OCI-LY7 (cell line): ENCODE measurements at regions of chr13 and their contacts with region 1.

Region 1: GRCh38 chr13:30617315-30618185 is at the start of gene USPL1:
- DNase-seq: peak; percentile 99
- H3K4me3 ChIP-seq: peak within 1 kb of the TSS; percentile 73
- H3K27ac ChIP-seq: peak within 1 kb of the TSS; percentile 92
- H3K4me1 ChIP-seq: peaks cover 43% of the 10 kb centered on the region
- CTCF ChIP-seq: peak; percentile 29; the same call in 1 of the 2 replicates
- total RNA-seq, gene USPL1: 19.2 and 21.1 TPM in 2 replicates

Region 2: DNA sequence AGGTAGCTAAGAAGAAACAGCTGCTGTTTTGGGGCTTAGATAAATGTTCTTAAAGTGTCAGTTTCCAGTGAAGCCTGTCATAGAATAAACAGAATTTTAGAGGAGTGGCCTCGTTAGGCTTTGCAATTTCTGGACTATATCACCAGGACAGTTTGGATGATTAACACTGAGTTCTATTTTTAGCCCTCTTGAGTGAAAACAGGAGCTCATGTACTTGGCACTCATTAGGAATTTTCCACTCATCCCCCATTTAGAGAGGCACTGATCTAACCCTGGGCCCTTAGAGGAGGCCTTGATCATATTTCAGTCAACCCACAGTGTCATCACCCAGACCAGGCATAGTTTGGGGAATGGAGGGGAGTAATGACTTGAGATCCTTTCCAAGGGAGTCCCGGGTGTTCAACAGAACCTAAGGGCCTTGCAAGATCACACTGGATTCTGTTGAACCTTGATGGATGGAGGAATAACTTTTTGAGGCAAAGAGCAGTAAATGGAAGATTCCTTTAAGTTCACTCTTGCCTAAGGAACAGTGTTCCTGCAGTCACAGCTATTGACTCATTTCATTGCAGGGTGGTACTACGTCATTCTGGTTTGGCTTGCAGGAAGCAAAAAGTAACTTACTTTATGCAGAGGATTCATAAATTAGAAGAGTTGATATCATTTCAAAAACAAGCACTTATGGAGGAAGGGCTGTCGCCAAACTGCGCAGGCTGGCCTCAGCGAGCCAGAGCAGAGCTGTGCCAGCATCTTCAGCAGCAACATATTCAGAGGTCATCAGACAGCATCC is 1182.2 kb before region 1 on chr13:
- CTCF ChIA-PET with region 1: no interaction called
- POLR2A ChIA-PET with region 1: interaction called, 3 read pairs
- intact Hi-C with region 1: loop called (anchors 10 kb)
- DNase-seq: no peak
- H3K4me3 ChIP-seq: peak overlapping the region; percentile 25
- H3K27ac ChIP-seq: peak overlapping the region; percentile 95
- H3K4me1 ChIP-seq: peaks cover 55% of the 10 kb centered on the region
- CTCF ChIP-seq: no peak

Region 3: GRCh38 chr13:30132623-30133553 is 484.7 kb before region 1 on chr13:
- CTCF ChIA-PET with region 1: no interaction called
- POLR2A ChIA-PET with region 1: no interaction called
- intact Hi-C with region 1: loop called (anchors 1 kb)
- DNase-seq: peak; percentile 93
- H3K4me3 ChIP-seq: no peak overlapping the region
- H3K27ac ChIP-seq: no peak overlapping the region
- H3K4me1 ChIP-seq: peaks cover 10% of the 10 kb centered on the region
- CTCF ChIP-seq: peak; percentile 94

Region 4: DNA sequence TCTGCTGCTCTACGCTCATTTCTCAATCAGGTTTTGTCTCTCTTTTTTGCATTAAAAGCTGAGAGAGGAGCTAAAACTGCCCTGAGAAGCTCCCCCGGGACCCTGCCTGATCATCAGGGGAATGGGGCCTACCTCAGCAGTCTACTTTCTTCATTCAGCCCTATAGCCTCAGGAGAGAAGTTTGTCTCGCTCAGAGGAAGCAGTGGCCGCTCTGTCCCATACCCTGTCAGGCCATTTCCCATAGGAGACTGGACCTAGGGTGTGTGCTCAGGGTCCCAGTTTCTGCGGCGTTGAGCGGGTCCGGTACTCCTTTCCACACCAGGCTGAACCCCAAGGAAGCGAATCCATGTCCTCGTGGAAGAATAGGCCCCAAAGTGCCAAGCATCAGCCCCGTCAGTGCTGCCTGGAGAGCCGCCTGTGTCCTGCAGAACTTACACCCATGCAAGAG is 173.6 kb before region 1 on chr13:
- CTCF ChIA-PET with region 1: no interaction called
- POLR2A ChIA-PET with region 1: interaction called, 24 read pairs
- intact Hi-C with region 1: loop called (anchors 5 kb)
- DNase-seq: peak; percentile 97
- H3K4me3 ChIP-seq: peak overlapping the region; percentile 87
- H3K27ac ChIP-seq: peak overlapping the region; percentile 98
- H3K4me1 ChIP-seq: peaks cover 72% of the 10 kb centered on the region
- CTCF ChIP-seq: no peak; the same call in 1 of the 2 replicates

Region 5: GRCh38 chr13:30647420-30647819 is 29.9 kb after region 1 on chr13:
- CTCF ChIA-PET with region 1: no interaction called
- POLR2A ChIA-PET with region 1: interaction called, 10 read pairs
- intact Hi-C with region 1: no loop called
- DNase-seq: no peak
- H3K4me3 ChIP-seq: peak overlapping the region; percentile 43
- H3K27ac ChIP-seq: peak overlapping the region; percentile 81
- H3K4me1 ChIP-seq: peaks cover 50% of the 10 kb centered on the region
- CTCF ChIP-seq: no peak

Region 6: GRCh38 chr13:30739761-30740642 is 122.5 kb after region 1 on chr13:
- CTCF ChIA-PET with region 1: no interaction called
- POLR2A ChIA-PET with region 1: interaction called, 8 read pairs
- intact Hi-C with region 1: loop called (anchors 2 kb)
- DNase-seq: peak; percentile 5
- H3K4me3 ChIP-seq: no peak overlapping the region
- H3K27ac ChIP-seq: no peak overlapping the region
- H3K4me1 ChIP-seq: peaks cover 57% of the 10 kb centered on the region
- CTCF ChIP-seq: no peak

Region 7: DNA sequence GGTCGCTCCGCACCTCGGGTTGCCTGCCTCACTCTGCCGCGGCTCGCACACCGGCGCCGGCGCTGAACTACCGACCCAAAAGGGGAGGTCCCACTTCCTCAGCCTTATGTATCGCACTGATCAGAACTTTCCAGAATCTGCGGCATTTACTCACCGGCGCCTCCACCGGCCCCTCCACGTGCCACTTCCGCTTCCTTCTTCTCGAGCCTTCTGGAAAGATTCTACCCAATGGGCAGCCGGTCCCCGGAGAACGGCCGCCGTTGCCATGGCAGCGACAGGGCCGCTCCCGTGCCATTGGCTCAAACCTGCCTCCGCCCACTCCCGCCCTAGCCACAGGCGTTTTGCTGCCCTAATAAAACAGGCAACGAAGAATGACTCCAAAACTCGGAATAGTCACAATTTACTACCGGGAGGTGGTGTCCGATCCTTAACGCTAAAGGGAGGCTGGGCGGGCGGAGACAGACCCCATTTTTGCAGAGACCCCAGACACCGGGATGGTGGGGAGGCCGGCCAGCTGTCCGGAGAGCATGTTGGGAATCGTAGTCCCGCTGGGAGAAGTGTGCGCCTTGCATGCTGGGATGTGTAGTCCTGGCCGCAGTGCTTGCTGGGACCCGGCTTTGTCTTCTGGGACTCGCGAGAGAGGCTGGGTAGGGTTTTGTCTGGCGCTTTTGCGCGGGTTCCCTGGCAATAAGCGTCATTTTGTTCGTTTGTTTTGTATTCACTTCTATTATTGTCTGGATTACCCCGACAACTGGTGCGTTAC is 544.5 kb after region 1 on chr13 and contains the start of gene HSPH1:
- CTCF ChIA-PET with region 1: no interaction called
- POLR2A ChIA-PET with region 1: no interaction called
- intact Hi-C with region 1: loop called (anchors 5 kb)
- DNase-seq: peak; percentile 99
- H3K4me3 ChIP-seq: peak within 1 kb of the TSS; percentile 91
- H3K27ac ChIP-seq: peak within 1 kb of the TSS; percentile 58
- H3K4me1 ChIP-seq: peaks cover 27% of the 10 kb centered on the region
- CTCF ChIP-seq: peak; percentile 45
- total RNA-seq, gene HSPH1: 89.6 and 110 TPM in 2 replicates